ENCODE measurements at regions of chr3 and their contacts with region 1.

Region 1: DNA sequence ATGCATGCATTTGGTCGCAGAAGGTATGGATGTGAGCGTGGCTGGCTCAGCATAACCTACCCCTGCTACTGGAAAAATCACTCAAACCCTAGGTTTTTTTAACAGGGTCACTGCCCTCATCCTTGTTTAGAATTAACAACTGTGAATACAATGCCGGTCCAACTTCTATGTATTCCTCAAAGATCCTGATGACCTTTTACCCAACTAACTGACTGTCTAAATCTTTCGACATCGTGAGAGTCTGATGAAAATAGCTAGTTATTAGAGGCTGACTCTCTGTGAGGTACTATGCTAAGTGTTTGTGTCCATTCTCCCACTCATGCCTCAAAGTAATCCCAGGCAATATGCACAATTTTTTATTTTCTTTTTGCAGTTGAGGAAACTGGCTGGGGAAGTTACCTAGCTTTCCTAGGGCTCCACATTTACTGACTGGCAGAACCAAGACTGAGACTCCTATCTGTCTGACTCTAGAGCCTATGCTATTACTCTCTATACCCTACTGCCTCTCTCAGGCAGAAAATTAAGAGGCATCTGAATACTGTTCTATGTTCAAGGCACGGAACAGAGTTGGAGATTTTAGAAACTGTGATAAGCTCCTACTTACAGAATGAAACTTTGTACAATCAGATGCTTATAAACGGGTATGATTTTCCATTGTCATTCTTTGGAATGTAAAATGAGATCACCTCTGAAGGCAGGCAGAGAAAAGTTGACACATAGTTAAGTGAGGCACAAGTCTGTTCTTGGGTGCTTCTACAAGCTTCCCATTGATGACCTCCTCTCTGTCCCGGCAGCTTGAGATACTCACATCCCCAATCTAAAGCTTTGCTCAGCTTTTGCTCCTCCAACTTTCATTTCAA is 56.4 kb downstream of the FILIP1L start:
- DNase-seq: no peak
- ATAC-seq: peak; percentile 58 to 63
- H3K4me3 ChIP-seq: no peak overlapping the region
- H3K27ac ChIP-seq: no peak overlapping the region
- H3K4me1 ChIP-seq: no peaks in the 10 kb centered on the region
- H3K27me3 ChIP-seq: no peaks in the 10 kb centered on the region

Region 2: DNA sequence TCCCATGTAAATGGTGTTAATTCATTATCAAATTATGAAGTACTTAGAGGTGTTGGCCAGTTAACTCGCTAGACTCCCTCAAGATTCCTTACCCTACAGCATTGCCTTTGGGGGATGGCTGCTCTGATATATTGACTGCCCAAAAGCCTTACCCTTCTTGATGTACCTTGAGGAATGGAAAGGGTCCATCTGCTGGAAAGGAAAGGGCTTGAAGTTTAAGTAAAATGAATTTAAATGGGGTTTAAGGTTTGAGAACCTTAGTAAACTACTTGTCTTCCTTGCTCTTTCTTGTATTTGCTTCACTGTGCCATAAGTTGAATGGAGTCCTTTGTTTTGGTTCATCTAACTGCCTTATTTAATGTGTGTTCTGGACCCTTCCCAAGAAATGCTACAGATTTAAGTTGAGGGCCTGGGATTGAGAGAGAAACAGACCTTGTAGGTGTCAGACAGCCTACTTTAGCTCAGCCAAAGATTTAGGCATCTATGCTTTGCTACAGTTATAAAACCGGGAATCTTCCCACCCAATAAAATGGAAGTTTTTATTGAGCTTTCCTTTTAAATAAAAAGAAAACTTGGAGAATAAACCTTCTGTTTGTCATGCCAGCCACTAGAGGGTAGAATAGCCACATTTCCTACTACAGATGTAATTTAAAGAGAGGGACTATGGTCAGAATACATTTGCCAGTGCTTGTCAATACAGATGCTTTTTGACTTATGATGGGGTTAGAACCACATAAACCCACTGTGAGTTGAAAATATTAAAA is 214.9 kb before region 1 on chr3:
- intact Hi-C with region 1: loop called in 1 of 4 experiments (anchors 10 kb)
- DNase-seq: no peak
- ATAC-seq: peak; percentile 80
- H3K4me3 ChIP-seq: no peak overlapping the region
- H3K27ac ChIP-seq: no peak overlapping the region
- H3K4me1 ChIP-seq: peaks cover 6% of the 10 kb centered on the region
- H3K27me3 ChIP-seq: no peaks in the 10 kb centered on the region

Region 3: GRCh38 chr3:99895703-99896441 is 162.1 kb before region 1 on chr3:
- intact Hi-C with region 1: no loop called
- DNase-seq: no peak
- ATAC-seq: peak; percentile 51 to 55
- H3K4me3 ChIP-seq: no peak overlapping the region
- H3K27ac ChIP-seq: no peak overlapping the region
- H3K4me1 ChIP-seq: peaks cover 1% of the 10 kb centered on the region
- H3K27me3 ChIP-seq: no peaks in the 10 kb centered on the region